ENCODE measurements at regions of chr9 and their contacts with region 1.

Region 1: GRCh38 chr9:33236366-33236970 is 3.5 kb upstream of the SPINK4 start:
- DNase-seq: no peak
- H3K4me3 Mint-ChIP-seq: no peak overlapping the region
- H3K27ac Mint-ChIP-seq: no peak overlapping the region
- H3K4me1 Mint-ChIP-seq: no peaks in the 10 kb centered on the region
- H3K27me3 Mint-ChIP-seq: peaks cover 4% of the 10 kb centered on the region

Region 2: GRCh38 chr9:33257276-33257675 is 20.8 kb after region 1 on chr9:
- CTCF ChIA-PET with region 1: no interaction called
- POLR2A ChIA-PET with region 1: no interaction called
- intact Hi-C with region 1: loop called (anchors 2 kb)
- DNase-seq: no peak
- H3K4me3 Mint-ChIP-seq: no peak overlapping the region
- H3K27ac Mint-ChIP-seq: no peak overlapping the region
- H3K4me1 Mint-ChIP-seq: peaks cover 8% of the 10 kb centered on the region
- H3K27me3 Mint-ChIP-seq: no peaks in the 10 kb centered on the region